ENCODE measurements at regions of chr2 and their contacts with region 1.

Region 1: GRCh38 chr2:43219383-43220228 is 6.8 kb downstream of the ZFP36L2 start:
- DNase-seq: peak; percentile 79
- ATAC-seq: peak; percentile 61
- H3K4me3 ChIP-seq: peak overlapping the region; percentile 88
- H3K27ac ChIP-seq: peak overlapping the region; percentile 90
- H3K4me1 ChIP-seq: peaks cover 43% of the 10 kb centered on the region
- H3K27me3 ChIP-seq: no peaks in the 10 kb centered on the region
- CTCF ChIP-seq: peak; percentile 25; the same call in 1 of the 2 replicates

Region 2: DNA sequence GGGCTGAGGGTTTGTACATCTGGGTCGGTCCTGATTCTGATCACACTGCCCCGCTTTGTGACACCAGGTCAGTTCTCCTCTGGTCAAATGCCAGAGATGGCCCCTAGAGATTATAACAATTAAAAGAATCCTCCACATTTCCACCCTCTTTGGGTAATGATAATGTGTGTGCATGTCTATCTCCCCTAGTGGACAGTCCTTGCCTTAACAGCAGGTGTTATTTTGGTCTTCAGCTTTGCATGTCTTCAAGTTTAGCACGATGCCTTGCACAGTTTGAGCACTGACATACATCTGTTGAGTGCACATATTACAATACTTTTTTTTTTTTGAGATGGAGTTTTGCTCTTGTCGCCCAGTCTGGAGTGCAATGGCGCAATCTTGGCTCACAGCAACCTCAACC is 832.9 kb before region 1 on chr2:
- CTCF ChIA-PET with region 1: no interaction called
- POLR2A ChIA-PET with region 1: no interaction called
- intact Hi-C with region 1: no loop called
- DNase-seq: peak; percentile 30
- ATAC-seq: no peak
- H3K4me3 ChIP-seq: no peak overlapping the region
- H3K27ac ChIP-seq: no peak overlapping the region
- H3K4me1 ChIP-seq: no peaks in the 10 kb centered on the region
- H3K27me3 ChIP-seq: no peaks in the 10 kb centered on the region
- CTCF ChIP-seq: peak; percentile 65

Region 3: GRCh38 chr2:43051316-43051715 is 168.3 kb before region 1 on chr2:
- CTCF ChIA-PET with region 1: no interaction called
- POLR2A ChIA-PET with region 1: interaction called, 10 read pairs
- intact Hi-C with region 1: no loop called
- DNase-seq: peak; percentile 86
- ATAC-seq: peak; percentile 95
- H3K4me3 ChIP-seq: no peak overlapping the region
- H3K27ac ChIP-seq: peak overlapping the region; percentile 18; the same call in 1 of the 2 replicates
- H3K4me1 ChIP-seq: peaks cover 27% of the 10 kb centered on the region
- H3K27me3 ChIP-seq: no peaks in the 10 kb centered on the region
- CTCF ChIP-seq: no peak

Region 4: GRCh38 chr2:43178602-43179542 is 40.7 kb before region 1 on chr2:
- CTCF ChIA-PET with region 1: no interaction called
- POLR2A ChIA-PET with region 1: no interaction called
- intact Hi-C with region 1: loop called (anchors 2 kb)
- DNase-seq: peak; percentile 84
- ATAC-seq: peak; percentile 92
- H3K4me3 ChIP-seq: peak overlapping the region; percentile 26; the same call in 1 of the 2 replicates
- H3K27ac ChIP-seq: peak overlapping the region; percentile 91
- H3K4me1 ChIP-seq: peaks cover 40% of the 10 kb centered on the region
- H3K27me3 ChIP-seq: no peaks in the 10 kb centered on the region
- CTCF ChIP-seq: no peak

Region 5: GRCh38 chr2:43196768-43197587 is 22.6 kb before region 1 on chr2:
- CTCF ChIA-PET with region 1: no interaction called
- POLR2A ChIA-PET with region 1: no interaction called
- intact Hi-C with region 1: no loop called
- DNase-seq: no peak
- ATAC-seq: no peak
- H3K4me3 ChIP-seq: no peak overlapping the region
- H3K27ac ChIP-seq: no peak overlapping the region
- H3K4me1 ChIP-seq: peaks cover 15% of the 10 kb centered on the region
- H3K27me3 ChIP-seq: no peaks in the 10 kb centered on the region
- CTCF ChIP-seq: no peak

Measured in PC-3 (cell line).